ENCODE measurements at regions of chr20 and their contacts with region 1.

Region 1: GRCh38 chr20:32789896-32790750 is 27.9 kb downstream of the DNMT3B start:
- H3K4me3 Mint-ChIP-seq: no peak overlapping the region
- H3K27ac Mint-ChIP-seq: no peak overlapping the region
- H3K4me1 Mint-ChIP-seq: peaks cover 9% of the 10 kb centered on the region
- H3K27me3 Mint-ChIP-seq: no peaks in the 10 kb centered on the region

Region 2: GRCh38 chr20:32894026-32894483 is 103.9 kb after region 1 on chr20:
- intact Hi-C with region 1: loop called (anchors 1 kb)
- H3K4me3 Mint-ChIP-seq: no peak overlapping the region
- H3K27ac Mint-ChIP-seq: no peak overlapping the region
- H3K4me1 Mint-ChIP-seq: no peaks in the 10 kb centered on the region
- H3K27me3 Mint-ChIP-seq: peaks cover 2% of the 10 kb centered on the region

Measured in dendritic cell treated with granulocyte-macrophage colony-stimulating factor and Interleukin-4, amounts not matched to agents 40 ng/mL and 50 ng/mL, for 4 days (primary cell).